ENCODE measurements at regions of chr3 and their contacts with region 1.

Region 1: GRCh38 chr3:53195602-53196574 is 34.9 kb downstream of the PRKCD start:
- DNase-seq: no peak
- ATAC-seq: peak; percentile 78
- H3K4me3 ChIP-seq: no peak overlapping the region
- H3K27ac ChIP-seq: no peak overlapping the region
- H3K4me1 ChIP-seq: peaks cover 3% of the 10 kb centered on the region; the same call in 1 of the 2 replicates
- H3K27me3 ChIP-seq: no peaks in the 10 kb centered on the region
- CTCF ChIP-seq: peak; percentile 95

Region 2: GRCh38 chr3:53114011-53114400 is 81.9 kb before region 1 on chr3:
- CTCF ChIA-PET with region 1: interaction called, 5 read pairs
- POLR2A ChIA-PET with region 1: no interaction called
- in situ Hi-C with region 1: no loop called
- intact Hi-C with region 1: loop called (anchors 1 kb)
- DNase-seq: peak; percentile 54
- ATAC-seq: peak; percentile 92
- H3K4me3 ChIP-seq: no peak overlapping the region
- H3K27ac ChIP-seq: no peak overlapping the region
- H3K4me1 ChIP-seq: peaks cover 5% of the 10 kb centered on the region
- H3K27me3 ChIP-seq: no peaks in the 10 kb centered on the region
- CTCF ChIP-seq: peak; percentile 90

Region 3: DNA sequence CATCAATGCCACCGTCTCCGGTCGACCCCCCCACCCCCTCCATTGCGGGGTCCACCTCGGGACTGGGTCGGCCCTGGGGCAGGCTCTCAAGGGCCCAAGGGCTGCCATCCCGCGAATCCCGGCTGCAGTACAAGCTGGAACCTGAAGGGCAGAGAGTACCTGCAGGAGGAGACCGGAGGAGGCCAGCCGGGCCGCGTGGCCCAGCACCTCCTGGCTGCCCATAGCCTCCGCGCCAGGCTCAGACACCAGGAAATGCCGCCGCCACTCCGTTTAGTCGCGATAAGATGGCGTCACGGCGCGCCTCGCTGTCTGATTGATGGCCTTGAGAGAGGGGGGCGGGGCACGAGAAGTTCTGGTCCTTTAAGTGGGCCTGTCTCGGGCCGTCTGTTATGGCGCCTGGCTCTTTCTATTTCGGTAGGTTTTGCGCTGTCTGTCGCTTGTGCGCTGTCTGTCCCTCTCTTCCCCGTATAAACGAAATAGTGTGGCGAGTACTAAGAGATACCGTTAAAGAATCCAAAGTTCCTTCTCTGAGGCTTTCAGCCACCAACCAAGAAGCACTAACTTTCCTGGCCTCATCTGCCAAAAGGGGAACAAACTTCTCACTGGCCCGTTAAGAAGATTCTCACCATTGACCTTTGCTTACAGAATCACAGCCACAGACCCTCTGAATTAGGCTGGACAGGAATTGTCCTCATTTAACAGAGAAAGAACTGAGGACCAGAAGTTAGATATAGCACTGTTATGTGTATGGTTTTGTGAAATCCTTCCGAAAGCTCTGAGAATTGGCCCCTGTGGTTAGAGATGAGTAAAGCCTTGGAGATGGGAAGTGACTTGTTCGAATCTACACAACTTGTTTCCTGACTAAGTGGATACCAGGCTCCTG is 65.5 kb before region 1 on chr3 and contains the start of gene RFT1:
- CTCF ChIA-PET with region 1: interaction called, 9 read pairs
- POLR2A ChIA-PET with region 1: no interaction called
- in situ Hi-C with region 1: no loop called
- intact Hi-C with region 1: loop called (anchors 2 kb)
- DNase-seq: no peak
- ATAC-seq: peak; percentile 95
- H3K4me3 ChIP-seq: peak within 1 kb of the TSS; percentile 93 to 94
- H3K27ac ChIP-seq: peak within 1 kb of the TSS; percentile 94
- H3K4me1 ChIP-seq: peaks cover 8% of the 10 kb centered on the region
- H3K27me3 ChIP-seq: no peaks in the 10 kb centered on the region
- CTCF ChIP-seq: no peak
- total RNA-seq, gene RFT1: 21.0 TPM

Region 4: DNA sequence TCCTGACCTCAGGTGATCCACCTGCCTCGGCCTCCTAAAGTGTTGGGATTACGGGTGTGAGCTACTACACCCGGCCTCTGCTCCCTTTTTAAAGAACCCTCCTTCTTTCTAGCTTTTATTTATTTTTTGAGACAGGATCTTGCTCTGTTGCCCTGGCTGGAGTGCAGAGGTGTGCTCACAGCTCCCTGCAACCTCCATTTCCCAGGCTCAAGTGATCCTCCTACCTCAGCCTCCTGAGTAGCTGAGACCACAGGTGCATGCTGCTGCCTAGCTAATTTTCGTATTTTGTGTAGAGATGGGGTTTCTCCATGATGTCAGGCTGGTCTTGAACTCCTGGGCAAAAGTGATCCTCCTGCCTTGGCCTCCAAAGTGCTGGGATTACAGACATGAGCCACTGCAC is 25.5 kb after region 1 on chr3:
- CTCF ChIA-PET with region 1: interaction called, 10 read pairs
- POLR2A ChIA-PET with region 1: no interaction called
- in situ Hi-C with region 1: no loop called
- intact Hi-C with region 1: no loop called
- DNase-seq: no peak
- ATAC-seq: no peak
- H3K4me3 ChIP-seq: no peak overlapping the region
- H3K27ac ChIP-seq: no peak overlapping the region
- H3K4me1 ChIP-seq: no peaks in the 10 kb centered on the region
- H3K27me3 ChIP-seq: no peaks in the 10 kb centered on the region
- CTCF ChIP-seq: no peak

Region 5: GRCh38 chr3:53658613-53659193 is 462.8 kb after region 1 on chr3:
- CTCF ChIA-PET with region 1: no interaction called
- POLR2A ChIA-PET with region 1: no interaction called
- in situ Hi-C with region 1: no loop called
- intact Hi-C with region 1: no loop called
- DNase-seq: no peak
- ATAC-seq: no peak
- H3K4me3 ChIP-seq: no peak overlapping the region
- H3K27ac ChIP-seq: no peak overlapping the region
- H3K4me1 ChIP-seq: no peaks in the 10 kb centered on the region
- H3K27me3 ChIP-seq: no peaks in the 10 kb centered on the region
- CTCF ChIP-seq: no peak

Measured in Panc1 (cell line).